ENCODE measurements at regions of chr4 and their contacts with region 1.

Region 1: DNA sequence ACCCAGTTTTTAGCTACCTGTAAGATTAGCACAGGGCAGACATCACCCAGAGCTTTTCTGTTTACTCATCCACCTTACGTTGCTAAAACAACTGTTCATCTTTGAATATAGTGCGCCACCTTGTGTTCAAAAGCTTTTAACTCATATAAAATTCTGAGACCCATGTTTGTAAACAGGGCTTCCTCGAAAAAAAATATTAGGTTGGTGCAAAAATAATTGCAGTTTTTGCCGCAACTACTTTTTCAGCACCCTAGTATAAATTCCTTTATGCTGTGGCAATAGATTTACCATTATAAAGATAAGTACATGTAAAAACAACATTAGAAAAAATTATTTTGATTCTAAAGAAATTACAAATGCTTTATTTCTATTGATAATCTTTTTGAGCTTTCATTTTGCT is 147.9 kb downstream of the LRBA start:
- DNase-seq: peak in 1 of 5 donors; percentile 27
- H3K4me3 ChIP-seq: no peak overlapping the region
- H3K27ac ChIP-seq: no peak overlapping the region
- H3K4me1 ChIP-seq: no peaks in the 10 kb centered on the region
- H3K27me3 ChIP-seq: no peaks in the 10 kb centered on the region
- CTCF ChIP-seq: peak; percentile 23 to 35 (median 31)
- EP300 ChIP-seq: no peak
- POLR2A ChIP-seq: no peak

Region 2: GRCh38 chr4:149980941-149981340 is 886.2 kb before region 1 on chr4:
- intact Hi-C with region 1: loop called in 1 of 4 experiments (anchors 10 kb)
- DNase-seq: peak; percentile 14 to 57 (median 42)
- H3K4me3 ChIP-seq: no peak overlapping the region
- H3K27ac ChIP-seq: no peak overlapping the region
- H3K4me1 ChIP-seq: no peaks in the 10 kb centered on the region
- H3K27me3 ChIP-seq: no peaks in the 10 kb centered on the region
- CTCF ChIP-seq: peak; percentile 44 to 65 (median 56)
- EP300 ChIP-seq: no peak
- POLR2A ChIP-seq: no peak

Region 3: DNA sequence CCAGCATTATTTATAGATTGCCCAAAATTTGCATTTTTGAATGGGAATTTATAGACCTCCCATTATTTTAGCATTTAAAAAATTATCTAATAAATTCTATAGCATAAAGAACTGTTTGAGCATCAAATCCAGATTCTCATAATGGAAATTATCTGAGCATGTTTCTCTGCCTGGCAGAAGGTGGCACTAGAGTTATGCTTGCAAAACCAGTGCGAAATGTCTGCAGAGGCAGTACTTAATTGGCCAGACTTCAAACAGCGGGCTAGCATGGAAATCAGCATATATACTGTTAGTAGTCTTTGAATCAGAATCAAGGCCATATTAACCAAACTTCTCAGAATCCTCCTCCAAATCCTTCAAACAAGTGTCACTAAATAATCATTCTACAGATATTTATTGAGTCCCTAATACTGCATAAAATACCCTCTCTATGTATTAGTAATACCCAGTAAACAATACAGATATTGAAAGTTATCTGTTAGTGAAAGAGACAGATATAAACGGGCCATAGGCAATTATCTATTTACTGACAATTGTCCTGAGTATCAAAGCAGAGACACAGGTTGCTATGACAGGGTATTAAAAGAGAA is 867.6 kb before region 1 on chr4:
- intact Hi-C with region 1: loop called in 2 of 4 experiments (anchors 10 kb)
- DNase-seq: peak in 2 of 5 donors; percentile 23
- H3K4me3 ChIP-seq: no peak overlapping the region
- H3K27ac ChIP-seq: no peak overlapping the region
- H3K4me1 ChIP-seq: peaks cover 4% of the 10 kb centered on the region
- H3K27me3 ChIP-seq: no peaks in the 10 kb centered on the region
- CTCF ChIP-seq: peak; percentile 18 to 35 (median 30)
- EP300 ChIP-seq: no peak
- POLR2A ChIP-seq: no peak

Region 4: GRCh38 chr4:150297861-150298474 is 569.2 kb before region 1 on chr4:
- intact Hi-C with region 1: loop called in 3 of 4 experiments (anchors 10 kb)
- DNase-seq: peak in 3 of 5 donors; percentile 20 to 44 (median 35)
- H3K4me3 ChIP-seq: no peak overlapping the region
- H3K27ac ChIP-seq: no peak overlapping the region
- H3K4me1 ChIP-seq: peaks cover 2% of the 10 kb centered on the region
- H3K27me3 ChIP-seq: no peaks in the 10 kb centered on the region
- CTCF ChIP-seq: peak in 2 of 3 donors; percentile 26 to 43
- EP300 ChIP-seq: no peak
- POLR2A ChIP-seq: no peak

Region 5: GRCh38 chr4:150886599-150886998 is 19.5 kb after region 1 on chr4:
- intact Hi-C with region 1: no loop called
- DNase-seq: no peak
- H3K4me3 ChIP-seq: no peak overlapping the region
- H3K27ac ChIP-seq: no peak overlapping the region
- H3K4me1 ChIP-seq: no peaks in the 10 kb centered on the region
- H3K27me3 ChIP-seq: peaks cover 3% of the 10 kb centered on the region
- CTCF ChIP-seq: no peak
- EP300 ChIP-seq: no peak
- POLR2A ChIP-seq: no peak